AG04449 (cell line): ENCODE measurements at regions of chr2 and their contacts with region 1.

Region 1: GRCh38 chr2:172102391-172103278 is at the start of gene DLX2:
- DNase-seq: no peak
- H3K4me3 ChIP-seq: peak within 1 kb of the TSS; percentile 81
- CTCF ChIP-seq: no peak

Region 2: GRCh38 chr2:171574149-171574795 is 528.4 kb before region 1 on chr2:
- CTCF ChIA-PET with region 1: interaction called, 35 read pairs
- POLR2A ChIA-PET with region 1: no interaction called
- DNase-seq: no peak
- H3K4me3 ChIP-seq: no peak overlapping the region
- CTCF ChIP-seq: peak; percentile 96

Region 3: DNA sequence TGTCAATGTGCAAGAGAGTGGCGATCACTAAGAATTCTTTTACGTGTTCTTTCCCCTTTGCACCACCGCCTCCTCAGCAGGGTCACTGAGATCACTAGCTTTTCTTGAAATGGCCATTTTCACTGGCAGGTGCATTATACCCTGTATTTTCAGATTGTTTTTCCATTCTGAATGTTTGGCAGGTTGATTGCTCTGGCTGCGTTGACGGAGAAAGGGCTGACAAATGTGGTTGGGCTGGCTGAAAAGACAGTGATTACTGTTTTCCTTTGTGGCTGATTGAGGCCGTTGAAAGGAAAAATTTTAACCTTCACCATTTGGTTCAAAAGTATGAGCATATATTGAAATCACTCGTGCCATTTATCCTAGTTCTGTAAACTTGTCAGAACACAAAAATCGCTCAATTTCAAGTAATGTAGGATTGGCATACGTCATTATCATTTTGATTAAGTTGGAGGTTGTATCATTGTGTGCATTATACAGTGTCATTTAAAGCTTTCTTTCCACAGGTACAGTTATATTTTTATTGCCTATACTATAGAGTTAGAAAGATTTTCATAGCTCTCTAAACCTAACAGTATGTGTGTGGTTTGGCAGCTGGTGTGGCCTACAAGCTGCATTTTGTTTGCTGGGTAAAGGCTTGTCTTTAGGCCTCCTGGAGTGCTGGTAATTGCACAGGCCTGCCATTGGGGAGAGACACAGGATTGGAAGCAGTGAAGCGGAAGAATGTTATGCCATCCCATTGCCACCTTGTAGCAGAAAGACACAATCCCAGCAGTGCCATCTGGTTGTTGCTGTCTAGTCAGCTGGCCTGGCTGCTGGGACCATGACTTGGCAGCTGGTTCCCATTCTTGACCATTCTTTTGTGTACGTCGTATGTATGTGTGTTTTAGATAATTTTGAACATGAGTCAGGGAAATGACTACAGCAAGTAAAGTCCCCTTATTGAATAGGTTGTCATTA is 378.6 kb before region 1 on chr2:
- CTCF ChIA-PET with region 1: interaction called, 17 read pairs
- POLR2A ChIA-PET with region 1: no interaction called
- DNase-seq: no peak
- H3K4me3 ChIP-seq: no peak overlapping the region
- CTCF ChIP-seq: peak; percentile 29

Region 4: DNA sequence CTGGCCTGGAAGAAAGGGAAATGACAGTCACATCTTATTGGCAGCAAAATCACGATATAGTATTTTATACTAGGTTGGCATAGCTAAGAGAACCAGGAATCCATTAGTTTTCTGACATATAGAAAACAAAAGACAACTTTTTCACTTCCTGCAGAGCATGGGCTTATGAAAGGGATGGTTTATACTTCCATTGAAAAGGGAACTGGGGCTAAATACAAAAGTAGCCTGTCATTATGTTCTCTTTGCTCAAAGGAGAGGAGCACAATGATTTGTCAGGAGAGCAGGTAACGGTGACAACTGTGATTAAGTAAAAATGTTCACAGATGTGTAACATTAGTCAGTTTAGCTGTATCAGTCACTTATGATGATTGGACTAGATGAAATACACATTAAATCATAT is 255.0 kb before region 1 on chr2:
- CTCF ChIA-PET with region 1: interaction called, 10 read pairs
- POLR2A ChIA-PET with region 1: no interaction called
- DNase-seq: no peak
- H3K4me3 ChIP-seq: no peak overlapping the region
- CTCF ChIP-seq: no peak

Region 5: DNA sequence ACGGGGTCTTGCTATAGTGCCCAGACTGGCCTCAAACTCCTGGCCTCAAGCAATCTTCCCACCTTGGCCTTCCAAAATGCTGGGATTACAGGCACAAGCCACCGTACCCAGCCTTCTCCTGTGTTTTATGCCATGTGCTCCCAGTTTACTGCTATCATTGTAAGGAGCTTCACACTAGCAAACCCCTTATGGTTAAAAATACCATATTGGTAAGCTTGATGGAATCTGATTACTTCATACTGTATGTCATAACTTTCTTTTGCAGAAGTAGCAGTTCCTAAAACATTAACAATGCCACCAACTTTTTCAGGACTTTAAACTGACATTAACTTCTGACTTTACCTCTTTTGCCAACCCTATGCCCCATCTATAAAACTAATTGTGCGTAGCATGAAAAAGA is 144.2 kb before region 1 on chr2:
- CTCF ChIA-PET with region 1: interaction called, 10 read pairs
- POLR2A ChIA-PET with region 1: interaction called, 3 read pairs
- DNase-seq: peak; percentile 40
- H3K4me3 ChIP-seq: no peak overlapping the region
- CTCF ChIP-seq: no peak

Region 6: GRCh38 chr2:172131713-172132555 is 29.3 kb after region 1 on chr2:
- CTCF ChIA-PET with region 1: interaction called, 21 read pairs
- POLR2A ChIA-PET with region 1: no interaction called
- DNase-seq: no peak
- H3K4me3 ChIP-seq: no peak overlapping the region
- CTCF ChIP-seq: no peak